Panc1 (cell line): ENCODE measurements at regions of chr7 and their contacts with region 1.

Region 1: DNA sequence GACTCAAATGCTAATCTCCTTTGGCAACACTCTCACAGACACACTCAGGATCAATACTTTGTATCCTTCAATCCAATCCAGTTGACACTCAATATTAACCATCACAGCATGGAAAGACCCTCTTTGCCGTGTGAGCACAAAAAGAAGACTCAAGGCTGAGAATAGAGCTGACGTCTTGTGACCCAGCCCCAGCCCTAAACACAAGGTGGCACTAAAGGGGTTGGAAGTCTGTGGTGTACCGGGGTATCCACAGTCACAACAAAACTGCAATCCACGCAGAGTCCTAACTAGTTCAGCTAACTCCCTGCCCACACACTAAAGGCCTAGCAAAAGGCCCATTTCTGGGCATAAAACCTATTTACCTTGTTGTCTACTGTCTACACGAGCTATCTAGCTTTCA is 200.1 kb downstream of the ACTR3B start:
- DNase-seq: no peak
- ATAC-seq: no peak
- H3K4me3 ChIP-seq: no peak overlapping the region
- H3K27ac ChIP-seq: no peak overlapping the region
- H3K4me1 ChIP-seq: no peaks in the 10 kb centered on the region
- H3K27me3 ChIP-seq: no peaks in the 10 kb centered on the region; the same call in 1 of the 2 replicates
- CTCF ChIP-seq: peak; percentile 23

Region 2: DNA sequence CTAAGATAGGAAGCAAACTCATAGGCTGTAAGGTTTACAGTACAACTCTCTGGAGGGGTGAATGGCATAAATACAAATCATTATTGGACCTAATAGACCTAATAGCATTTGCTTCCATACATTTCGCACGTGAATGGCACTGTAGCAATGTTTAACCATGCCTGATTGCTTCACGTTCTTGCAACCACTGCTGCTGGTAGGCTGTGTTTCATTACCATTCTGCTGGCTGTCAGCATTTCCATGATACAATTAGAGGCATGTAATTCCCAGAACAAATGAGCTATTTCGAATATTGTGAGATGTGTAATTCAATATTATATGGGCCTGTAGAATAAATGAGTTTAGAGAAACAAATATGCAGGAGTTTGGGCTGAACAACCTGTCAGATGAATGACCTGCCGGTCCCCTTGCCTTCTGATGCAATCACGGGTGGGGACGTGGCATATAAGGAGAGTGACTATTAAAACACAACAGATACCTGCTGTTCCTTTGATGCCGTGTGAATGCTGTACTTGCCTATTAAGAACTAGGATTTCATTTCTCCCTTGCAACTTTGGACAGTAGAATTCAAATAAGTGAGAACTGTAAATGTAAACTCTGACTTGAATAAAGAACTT is 193.3 kb after region 1 on chr7:
- CTCF ChIA-PET with region 1: no interaction called
- POLR2A ChIA-PET with region 1: interaction called, 11 read pairs
- in situ Hi-C with region 1: no loop called
- intact Hi-C with region 1: no loop called
- DNase-seq: no peak
- ATAC-seq: no peak
- H3K4me3 ChIP-seq: no peak overlapping the region
- H3K27ac ChIP-seq: no peak overlapping the region
- H3K4me1 ChIP-seq: no peaks in the 10 kb centered on the region
- H3K27me3 ChIP-seq: no peaks in the 10 kb centered on the region
- CTCF ChIP-seq: no peak